Common myeloid progenitor, CD34-positive (primary cell): ENCODE measurements at regions of chr10 and their contacts with region 1.

Region 1: DNA sequence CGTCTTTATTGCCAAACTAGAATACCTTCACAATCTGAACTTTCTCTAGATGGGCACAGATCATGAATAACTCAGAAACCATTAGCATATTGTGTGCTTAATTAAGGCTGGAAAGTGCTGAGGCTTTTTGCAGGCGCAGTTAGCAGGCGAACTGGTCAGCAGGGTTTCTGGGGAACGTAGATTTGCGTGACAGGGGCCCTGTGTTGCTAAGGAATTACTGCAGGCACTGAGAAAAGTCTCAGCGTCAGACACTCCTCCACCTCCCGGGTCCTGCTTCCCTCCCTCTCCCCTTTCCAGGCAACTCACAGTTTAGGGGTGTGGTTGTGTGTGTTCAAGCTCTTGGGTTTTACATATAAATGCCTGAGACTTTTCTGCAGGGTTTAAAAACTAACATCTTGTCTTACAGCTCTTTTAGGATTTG is 2.2 kb downstream of the MAP3K8 start:
- DNase-seq: peak in 2 of 3 donors; percentile 25 to 31
- H3K4me3 ChIP-seq: peak overlapping the region; percentile 13 to 97 (median 92)
- H3K27ac ChIP-seq: peak overlapping the region in 1 of 2 experiments; percentile 89
- H3K4me1 ChIP-seq: peaks cover 20 to 56% (median 41%) of the 10 kb centered on the region in 4 experiments
- H3K27me3 ChIP-seq: no peaks in the 10 kb centered on the region

Region 2: DNA sequence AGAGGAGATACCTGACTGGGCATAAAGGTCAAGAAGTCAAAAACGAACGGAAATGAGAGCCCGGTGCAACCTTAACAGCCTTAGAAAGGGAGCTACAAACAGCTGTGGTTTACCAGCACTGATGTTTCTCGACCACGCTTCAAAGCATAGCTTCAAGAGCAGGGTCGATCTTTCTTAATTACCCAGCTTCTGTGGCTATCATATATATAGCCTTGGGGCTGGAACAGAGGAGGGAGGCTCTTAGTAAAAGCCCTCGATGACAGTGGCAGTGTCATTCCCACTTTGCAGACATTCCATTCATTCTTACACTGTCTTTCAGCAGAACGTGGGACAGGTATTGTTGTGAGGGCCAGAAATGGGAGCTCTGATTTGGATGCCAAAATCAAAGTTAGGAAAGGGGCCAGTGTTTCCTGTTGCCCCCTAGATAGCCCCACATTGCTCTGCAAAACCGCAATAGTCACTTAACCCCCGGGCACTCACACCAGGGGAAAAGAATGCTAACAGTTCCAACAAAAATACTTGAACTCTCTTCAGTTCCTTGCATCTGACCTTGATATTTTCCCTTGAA is 228.6 kb before region 1 on chr10:
- CTCF ChIA-PET with region 1: no interaction called
- POLR2A ChIA-PET with region 1: no interaction called
- DNase-seq: no peak
- H3K4me3 ChIP-seq: no peak overlapping the region
- H3K27ac ChIP-seq: no peak overlapping the region
- H3K4me1 ChIP-seq: no peaks in the 10 kb centered on the region
- H3K27me3 ChIP-seq: no peaks in the 10 kb centered on the region

Region 3: DNA sequence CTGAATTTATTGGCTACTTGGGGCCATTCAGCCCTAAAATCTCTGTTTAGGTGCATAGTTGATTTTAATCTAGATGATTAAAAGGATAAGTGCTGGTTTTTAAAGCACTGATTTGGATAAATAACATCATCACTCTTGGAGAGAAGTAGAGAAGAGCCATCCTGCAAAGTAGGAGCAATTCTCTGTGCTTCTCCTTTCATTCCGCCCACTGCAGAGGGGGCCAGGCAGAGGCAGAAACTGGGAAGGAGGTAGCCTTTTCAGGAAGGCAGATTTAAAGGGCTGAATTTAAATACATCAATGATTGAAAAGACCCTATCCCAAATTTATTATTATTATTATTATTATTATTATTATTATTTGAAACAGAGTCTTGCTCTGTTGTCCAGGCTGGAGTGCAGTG is 11.9 kb after region 1 on chr10:
- CTCF ChIA-PET with region 1: interaction called, 18 read pairs
- POLR2A ChIA-PET with region 1: interaction called, 3 read pairs
- DNase-seq: no peak
- H3K4me3 ChIP-seq: no peak overlapping the region
- H3K27ac ChIP-seq: no peak overlapping the region
- H3K4me1 ChIP-seq: peaks cover 5 to 32% (median 9%) of the 10 kb centered on the region in 4 experiments
- H3K27me3 ChIP-seq: no peaks in the 10 kb centered on the region